ENCODE measurements at regions of chr16 and their contacts with region 1.

Region 1: GRCh38 chr16:11715246-11715947 is 27.3 kb downstream of the TXNDC11 start:
- DNase-seq: no peak
- H3K4me3 ChIP-seq: no peak overlapping the region
- H3K27ac ChIP-seq: peak overlapping the region in 2 of 4 donors; percentile 45 to 54
- H3K4me1 ChIP-seq: peaks cover 0 to 42% (median 39%) of the 10 kb centered on the region in 4 donors
- H3K27me3 ChIP-seq: no peaks in the 10 kb centered on the region
- CTCF ChIP-seq: no peak
- EP300 ChIP-seq: no peak
- POLR2A ChIP-seq: no peak

Region 2: DNA sequence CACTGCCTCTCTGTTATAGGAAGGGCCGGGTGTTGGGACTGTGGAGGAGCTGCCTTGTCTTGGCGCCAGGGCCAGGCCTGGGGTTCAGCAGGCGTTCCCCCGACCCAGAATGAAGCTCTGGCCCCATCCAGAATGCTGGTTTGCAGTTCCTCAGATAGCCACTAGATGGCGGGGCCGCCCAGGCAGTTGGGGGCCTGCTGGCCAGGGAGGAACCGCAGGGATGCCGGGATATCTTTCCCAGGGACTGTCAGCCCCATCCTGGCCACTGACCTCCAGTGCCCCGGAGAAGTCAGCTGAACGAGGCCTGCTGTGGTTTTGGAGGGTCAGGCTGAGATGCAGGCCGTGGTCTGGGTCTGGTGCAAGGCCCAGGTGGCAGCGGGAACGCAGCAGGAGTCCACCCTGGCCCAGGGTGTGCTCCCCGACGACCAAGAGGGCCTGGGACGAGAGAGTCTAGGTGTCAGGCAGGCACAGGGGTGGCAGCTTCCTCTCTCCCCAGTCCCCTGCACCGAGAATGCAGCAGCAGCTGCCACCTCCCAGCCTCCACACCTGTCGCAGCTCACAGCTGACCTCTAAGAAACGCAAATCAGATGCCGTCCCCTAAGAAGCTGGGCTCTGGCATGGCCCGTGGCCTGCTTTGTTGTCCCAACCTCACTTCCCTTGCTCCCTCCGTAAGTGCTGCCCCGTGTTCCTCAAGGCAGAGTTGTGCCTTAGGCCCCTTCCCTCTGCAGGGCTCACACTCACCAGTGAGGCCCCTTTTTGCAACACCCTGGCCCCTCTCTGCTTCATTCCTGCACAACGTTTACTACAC is 319.0 kb before region 1 on chr16:
- intact Hi-C with region 1: loop called (anchors 2 kb)
- DNase-seq: peak; percentile 84
- H3K4me3 ChIP-seq: no peak overlapping the region
- H3K27ac ChIP-seq: no peak overlapping the region
- H3K4me1 ChIP-seq: peaks cover 0 to 3% (median 0%) of the 10 kb centered on the region in 4 donors
- H3K27me3 ChIP-seq: no peaks in the 10 kb centered on the region
- CTCF ChIP-seq: peak; percentile 88 to 100 (median 96)
- EP300 ChIP-seq: no peak
- POLR2A ChIP-seq: no peak

Region 3: DNA sequence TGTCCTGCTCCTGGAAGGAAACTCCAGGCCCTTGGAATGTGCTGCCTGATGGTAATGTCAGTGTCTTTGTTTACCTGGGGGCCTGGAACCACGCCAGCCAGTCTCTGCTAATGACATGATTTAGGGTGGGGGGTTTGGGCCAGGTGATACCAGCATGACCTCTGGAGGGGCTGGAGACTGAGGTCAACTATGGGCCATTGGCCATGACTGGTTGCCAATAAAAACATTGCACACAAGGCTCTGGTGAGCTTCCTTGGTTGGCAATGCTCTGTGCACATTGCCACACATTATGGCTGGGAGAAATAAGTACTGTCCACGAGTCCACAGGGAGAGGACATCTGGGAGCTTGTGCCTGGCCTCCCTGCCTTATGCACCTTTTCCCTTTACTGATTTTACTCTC is 181.1 kb before region 1 on chr16:
- intact Hi-C with region 1: loop called (anchors 5 kb)
- DNase-seq: no peak
- H3K4me3 ChIP-seq: no peak overlapping the region
- H3K27ac ChIP-seq: no peak overlapping the region
- H3K4me1 ChIP-seq: no peaks in the 10 kb centered on the region
- H3K27me3 ChIP-seq: no peaks in the 10 kb centered on the region
- CTCF ChIP-seq: no peak
- EP300 ChIP-seq: no peak
- POLR2A ChIP-seq: no peak

Region 4: DNA sequence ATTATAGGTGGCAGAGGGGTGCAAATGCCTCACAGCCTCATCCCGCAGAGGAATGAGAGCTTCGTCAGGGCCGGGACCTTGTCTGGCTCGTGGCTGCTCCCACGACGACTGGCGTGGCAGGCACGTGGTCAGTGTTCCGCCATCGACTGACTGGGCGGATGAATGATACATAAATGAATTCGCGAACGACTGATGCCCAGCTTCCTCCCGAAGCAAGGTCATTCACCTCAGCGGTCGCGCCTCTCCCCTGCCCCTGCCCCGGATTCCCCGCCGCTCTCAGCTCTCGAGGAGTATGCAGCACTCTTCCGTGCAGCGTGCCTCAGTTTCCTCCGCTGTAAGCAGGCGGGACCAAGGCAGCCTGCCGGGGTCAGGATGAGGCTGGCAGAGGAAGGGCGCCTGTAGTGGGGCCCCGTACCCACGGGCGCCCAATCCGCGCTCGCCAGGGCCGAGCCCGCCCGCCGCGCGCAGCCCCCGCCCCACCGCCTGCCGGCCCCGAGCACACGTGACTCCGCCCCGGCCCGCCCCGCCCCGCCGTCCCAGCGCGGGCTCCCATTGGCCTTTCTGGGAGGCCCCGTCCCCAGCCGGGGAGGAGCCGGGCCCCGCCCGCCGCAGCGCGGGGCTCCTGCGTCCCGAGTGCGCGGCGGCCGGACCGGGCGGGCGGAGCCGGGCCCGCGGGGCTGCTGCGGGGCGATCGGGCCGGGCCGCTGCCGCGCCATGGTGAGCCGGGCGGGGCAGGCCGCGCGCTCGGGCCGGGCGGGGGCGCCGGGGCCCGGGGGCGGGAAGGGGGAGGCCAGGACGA is 47.4 kb before region 1 on chr16 and contains the start of gene SNN:
- intact Hi-C with region 1: loop called (anchors 5 kb)
- DNase-seq: peak; percentile 93
- H3K4me3 ChIP-seq: peak within 1 kb of the TSS; percentile 54 to 100 (median 98)
- H3K27ac ChIP-seq: peak within 1 kb of the TSS; percentile 75 to 84 (median 82)
- H3K4me1 ChIP-seq: peaks cover 0 to 48% (median 45%) of the 10 kb centered on the region in 4 donors
- H3K27me3 ChIP-seq: no peaks in the 10 kb centered on the region
- CTCF ChIP-seq: no peak
- EP300 ChIP-seq: no peak
- POLR2A ChIP-seq: no peak
- total RNA-seq, gene SNN: 10.8 to 15.3 (median 13.5) TPM

Region 5: DNA sequence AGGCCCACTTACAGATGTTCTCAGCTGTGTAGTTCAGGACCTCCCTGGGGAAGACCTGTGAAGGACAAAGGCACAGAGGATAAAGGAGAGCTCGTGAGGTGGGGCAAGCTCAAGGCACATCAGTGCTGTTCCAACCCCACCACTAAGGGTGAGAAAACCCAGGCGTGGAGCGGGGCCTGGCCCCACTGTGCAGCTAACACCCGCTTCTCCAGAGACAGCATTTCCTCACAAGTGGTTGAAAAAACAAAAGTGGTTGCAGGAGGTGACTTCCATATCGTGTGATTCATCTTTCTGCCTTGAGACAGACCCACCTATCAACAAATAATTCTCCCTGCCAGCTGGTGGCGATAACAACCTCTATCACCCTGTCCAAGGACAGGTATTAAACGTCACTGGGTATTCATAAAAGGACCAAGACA is 17.1 kb before region 1 on chr16:
- intact Hi-C with region 1: no loop called
- DNase-seq: no peak
- H3K4me3 ChIP-seq: no peak overlapping the region
- H3K27ac ChIP-seq: no peak overlapping the region
- H3K4me1 ChIP-seq: no peaks in the 10 kb centered on the region
- H3K27me3 ChIP-seq: no peaks in the 10 kb centered on the region
- CTCF ChIP-seq: no peak
- EP300 ChIP-seq: no peak
- POLR2A ChIP-seq: no peak

Region 6: DNA sequence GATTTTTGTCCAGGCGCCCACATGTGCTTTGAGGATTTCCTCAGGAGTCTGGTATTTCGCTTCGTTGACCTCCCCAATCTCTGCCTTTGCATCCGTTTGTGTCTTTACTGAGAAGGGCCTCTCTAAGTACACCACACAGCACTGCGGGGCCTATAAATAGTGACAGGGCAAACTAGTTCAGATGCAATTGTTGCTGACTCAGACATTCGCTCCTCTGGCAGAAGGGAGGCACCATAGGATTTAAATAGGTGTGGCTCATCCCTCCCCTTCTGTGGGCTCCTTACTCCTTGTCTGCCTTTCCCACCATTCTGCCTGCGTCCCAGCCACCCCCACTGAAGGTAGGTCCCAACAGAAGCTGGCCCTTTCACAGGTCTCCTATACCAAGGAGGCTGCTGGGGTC is 1378.3 kb after region 1 on chr16:
- intact Hi-C with region 1: no loop called
- DNase-seq: no peak
- H3K4me3 ChIP-seq: no peak overlapping the region
- H3K27ac ChIP-seq: no peak overlapping the region
- H3K4me1 ChIP-seq: no peaks in the 10 kb centered on the region
- H3K27me3 ChIP-seq: no peaks in the 10 kb centered on the region
- CTCF ChIP-seq: no peak
- EP300 ChIP-seq: no peak
- POLR2A ChIP-seq: no peak

Measured in sigmoid colon (tissue), 7 donors.